Right ventricle myocardium superior (tissue), 1 donor: ENCODE measurements at regions of chr14 and their contacts with region 1.

Region 1: GRCh38 chr14:34671716-34672115 is 41.8 kb upstream of the SNX6 start:
- DNase-seq: no peak
- ATAC-seq: peak; percentile 31

Region 2: DNA sequence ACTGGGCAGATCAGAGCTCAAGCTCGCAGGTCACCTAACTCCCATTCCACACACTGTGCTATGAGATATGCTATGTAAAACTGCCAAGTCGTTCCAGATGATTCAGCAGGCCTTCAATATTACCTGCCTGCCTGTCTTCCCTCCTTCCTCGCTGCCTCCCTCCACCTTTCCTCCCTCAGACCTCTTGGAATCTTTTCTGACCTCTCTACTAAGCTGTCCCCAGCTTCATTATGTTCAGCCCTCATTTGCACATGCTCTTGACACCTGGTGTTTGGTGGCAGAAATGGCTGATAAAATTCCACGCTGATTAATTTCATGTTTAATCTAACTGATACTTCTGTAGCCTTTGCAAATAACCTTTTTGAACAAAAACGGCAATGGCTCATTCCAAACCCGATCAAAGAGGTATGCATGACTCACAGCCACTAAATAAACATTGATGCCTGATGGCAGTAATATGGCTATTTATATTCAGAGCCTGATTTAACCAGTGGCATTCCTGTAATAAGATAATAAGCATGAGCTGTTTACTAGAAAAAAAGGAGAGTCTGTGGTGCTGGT is 590.1 kb before region 1 on chr14:
- intact Hi-C with region 1: no loop called
- DNase-seq: no peak
- ATAC-seq: peak; percentile 86

Region 3: GRCh38 chr14:34650421-34651216 is 21.1 kb before region 1 on chr14:
- intact Hi-C with region 1: no loop called
- DNase-seq: no peak
- ATAC-seq: peak; percentile 46

Region 4: GRCh38 chr14:34722717-34723545 is 51.2 kb after region 1 on chr14:
- intact Hi-C with region 1: loop called (anchors 1 kb)
- DNase-seq: no peak
- ATAC-seq: peak; percentile 69